ENCODE measurements at regions of chr3 and their contacts with region 1.

Region 1: DNA sequence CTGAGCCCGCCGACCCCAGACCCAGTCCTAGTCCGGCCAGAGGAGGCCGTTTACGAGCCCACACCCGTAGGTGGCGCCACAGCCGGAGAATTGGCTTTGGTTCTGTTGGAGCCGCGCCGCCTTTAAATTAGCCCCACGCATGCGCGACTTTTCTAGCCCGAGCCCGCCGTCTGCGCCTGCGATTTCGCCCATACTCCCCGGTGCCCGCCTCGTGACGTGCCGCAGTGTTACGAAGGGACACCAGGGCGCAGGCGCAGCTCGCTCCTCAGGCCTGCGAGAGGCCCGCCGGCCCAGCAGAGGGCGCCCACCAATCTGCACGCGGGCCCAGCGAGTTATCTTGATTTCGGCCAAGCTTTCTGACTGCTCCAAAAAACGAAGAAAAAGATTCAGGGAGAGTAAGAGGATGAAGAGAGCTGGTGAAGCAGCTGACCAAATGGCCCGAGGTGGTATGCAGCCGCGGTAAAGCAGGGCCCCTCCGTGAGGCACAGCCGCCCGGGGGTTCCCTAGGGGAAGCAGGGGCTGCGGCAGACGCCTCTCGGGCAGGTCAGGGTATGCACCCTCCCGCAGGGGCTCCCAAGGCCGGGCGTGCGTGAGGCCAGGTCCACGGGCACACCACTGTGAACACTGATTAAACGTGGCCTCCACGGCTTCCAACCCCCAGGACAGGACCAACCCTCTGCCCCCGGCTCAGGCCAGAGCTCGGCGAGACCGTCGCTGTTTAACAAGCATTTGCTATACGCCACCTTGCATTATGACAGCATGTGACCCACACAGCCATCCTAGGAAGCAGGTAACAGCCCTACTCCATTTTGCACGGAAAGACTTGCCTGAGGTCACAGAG is 32.8 kb downstream of the RPN1 start:
- DNase-seq: peak; percentile 97 to 99 (median 98)
- H3K4me3 ChIP-seq: peak overlapping the region; percentile 74 to 89 (median 85)
- H3K27ac ChIP-seq: peak overlapping the region; percentile 85 to 88
- H3K4me1 ChIP-seq: peaks cover 5 to 75% (median 52%) of the 10 kb centered on the region in 4 experiments
- H3K27me3 ChIP-seq: no peaks in the 10 kb centered on the region

Region 2: GRCh38 chr3:128632301-128632700 is 14.5 kb after region 1 on chr3:
- CTCF ChIA-PET with region 1: interaction called, 11 read pairs
- POLR2A ChIA-PET with region 1: interaction called, 3 read pairs
- DNase-seq: no peak
- H3K4me3 ChIP-seq: no peak overlapping the region
- H3K27ac ChIP-seq: no peak overlapping the region
- H3K4me1 ChIP-seq: no peaks in the 10 kb centered on the region
- H3K27me3 ChIP-seq: no peaks in the 10 kb centered on the region

Measured in common myeloid progenitor, CD34-positive (primary cell).